ENCODE measurements at regions of chr14 and their contacts with region 1.

Region 1: GRCh38 chr14:64891839-64892375 is 12.2 kb upstream of the SPTB start:
- DNase-seq: peak; percentile 36
- ATAC-seq: peak; percentile 91
- H3K4me3 ChIP-seq: no peak overlapping the region
- H3K27ac ChIP-seq: no peak overlapping the region
- H3K4me1 ChIP-seq: no peaks in the 10 kb centered on the region
- H3K27me3 ChIP-seq: 0 out of 4 replicates have a peak, but pooled peaks cover 0 to 4% of the 10 kb centered on the region in 2 experiments
- CTCF ChIP-seq: peak; percentile 42 to 77 (median 62); a peak in 5 of 6 replicates
- EP300 ChIP-seq: no peak
- POLR2A ChIP-seq: no peak
- RAD21 ChIP-seq: peak; percentile 81

Region 2: GRCh38 chr14:64671591-64671990 is 220.3 kb before region 1 on chr14:
- CTCF ChIA-PET with region 1: interaction called, 15 read pairs
- POLR2A ChIA-PET with region 1: no interaction called
- RAD21 ChIA-PET with region 1: interaction called, 8 read pairs
- SMC1A ChIA-PET with region 1: interaction called, 38 read pairs
- in situ Hi-C with region 1: no loop called
- intact Hi-C with region 1: loop called (anchors 5 kb)
- DNase-seq: no peak
- ATAC-seq: peak; percentile 54
- H3K4me3 ChIP-seq: no peak overlapping the region
- H3K27ac ChIP-seq: no peak overlapping the region
- H3K4me1 ChIP-seq: peaks cover 6% of the 10 kb centered on the region
- H3K27me3 ChIP-seq: no peaks in the 10 kb centered on the region
- CTCF ChIP-seq: peak; percentile 63 to 66 (median 66)
- EP300 ChIP-seq: no peak
- POLR2A ChIP-seq: no peak
- RAD21 ChIP-seq: peak; percentile 70

Region 3: GRCh38 chr14:64708148-64709004 is 183.5 kb before region 1 on chr14:
- CTCF ChIA-PET with region 1: no interaction called
- POLR2A ChIA-PET with region 1: no interaction called
- RAD21 ChIA-PET with region 1: no interaction called
- SMC1A ChIA-PET with region 1: no interaction called
- in situ Hi-C with region 1: no loop called
- intact Hi-C with region 1: no loop called
- DNase-seq: no peak
- ATAC-seq: peak; percentile 29
- H3K4me3 ChIP-seq: no peak overlapping the region
- H3K27ac ChIP-seq: no peak overlapping the region
- H3K4me1 ChIP-seq: peaks cover 5% of the 10 kb centered on the region; the same call in 1 of the 2 replicates
- H3K27me3 ChIP-seq: peaks cover 4 to 14% of the 10 kb centered on the region in 2 experiments; a peak in 3 of 4 replicates
- CTCF ChIP-seq: no peak
- EP300 ChIP-seq: no peak
- POLR2A ChIP-seq: no peak
- RAD21 ChIP-seq: no peak

Region 4: DNA sequence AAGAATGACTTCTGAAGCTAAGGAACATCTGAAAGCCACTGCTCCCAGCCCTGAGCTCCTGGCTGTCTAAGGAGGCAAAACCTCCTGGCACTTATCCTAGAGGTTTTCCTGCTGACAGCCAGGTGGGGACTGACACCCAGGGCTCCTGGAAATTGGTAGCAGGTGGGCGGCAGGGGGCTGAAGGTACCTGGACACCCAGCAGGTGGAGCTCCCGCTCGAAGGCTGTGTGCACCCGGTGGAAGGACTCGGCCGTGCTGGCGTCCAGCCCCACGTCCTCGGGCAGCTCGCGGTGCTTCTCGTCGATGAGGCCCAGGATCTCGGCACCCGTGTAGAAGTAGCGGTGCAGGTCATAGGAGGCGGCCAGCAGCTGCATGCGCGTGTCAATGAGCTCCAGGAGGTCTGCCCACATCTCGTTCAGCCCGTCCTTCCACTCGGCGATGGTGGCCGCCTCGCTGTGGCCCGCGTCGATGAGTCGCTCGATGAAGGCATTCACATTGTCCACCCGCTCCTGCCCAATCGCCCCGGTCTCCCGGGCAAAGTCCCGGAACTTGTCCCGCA is 119.4 kb before region 1 on chr14:
- CTCF ChIA-PET with region 1: interaction called, 10 read pairs
- POLR2A ChIA-PET with region 1: no interaction called
- RAD21 ChIA-PET with region 1: interaction called, 13 read pairs
- SMC1A ChIA-PET with region 1: interaction called, 8 read pairs
- in situ Hi-C with region 1: no loop called
- intact Hi-C with region 1: no loop called
- DNase-seq: no peak
- ATAC-seq: no peak
- H3K4me3 ChIP-seq: no peak overlapping the region
- H3K27ac ChIP-seq: no peak overlapping the region
- H3K4me1 ChIP-seq: no peaks in the 10 kb centered on the region
- H3K27me3 ChIP-seq: no peaks in the 10 kb centered on the region; a peak in 1 of 4 replicates
- CTCF ChIP-seq: 0 out of 6 replicates have a peak, but pooled peaks of 2 of the 3 experiments have one; percentile 3 to 6
- EP300 ChIP-seq: no peak
- POLR2A ChIP-seq: no peak
- RAD21 ChIP-seq: no peak

Region 5: GRCh38 chr14:64817631-64818030 is 74.3 kb before region 1 on chr14:
- CTCF ChIA-PET with region 1: interaction called, 111 read pairs
- POLR2A ChIA-PET with region 1: no interaction called
- RAD21 ChIA-PET with region 1: interaction called, 87 read pairs
- SMC1A ChIA-PET with region 1: interaction called, 88 read pairs
- in situ Hi-C with region 1: loop called (anchors 5 kb)
- intact Hi-C with region 1: no loop called
- DNase-seq: no peak
- ATAC-seq: no peak
- H3K4me3 ChIP-seq: no peak overlapping the region
- H3K27ac ChIP-seq: no peak overlapping the region
- H3K4me1 ChIP-seq: no peaks in the 10 kb centered on the region
- H3K27me3 ChIP-seq: peaks cover 6 to 7% of the 10 kb centered on the region in 2 experiments; a peak in 3 of 4 replicates
- CTCF ChIP-seq: no peak
- EP300 ChIP-seq: no peak
- POLR2A ChIP-seq: no peak
- RAD21 ChIP-seq: no peak

Region 6: GRCh38 chr14:64844272-64844671 is 47.6 kb before region 1 on chr14:
- CTCF ChIA-PET with region 1: interaction called, 8 read pairs
- POLR2A ChIA-PET with region 1: no interaction called
- RAD21 ChIA-PET with region 1: interaction called, 11 read pairs
- SMC1A ChIA-PET with region 1: interaction called, 5 read pairs
- in situ Hi-C with region 1: no loop called
- intact Hi-C with region 1: no loop called
- DNase-seq: peak; percentile 35
- ATAC-seq: peak; percentile 92
- H3K4me3 ChIP-seq: no peak overlapping the region
- H3K27ac ChIP-seq: no peak overlapping the region
- H3K4me1 ChIP-seq: peaks cover 9% of the 10 kb centered on the region
- H3K27me3 ChIP-seq: no peaks in the 10 kb centered on the region; a peak in 1 of 4 replicates
- CTCF ChIP-seq: no peak
- EP300 ChIP-seq: no peak
- POLR2A ChIP-seq: no peak
- RAD21 ChIP-seq: no peak

Region 7: DNA sequence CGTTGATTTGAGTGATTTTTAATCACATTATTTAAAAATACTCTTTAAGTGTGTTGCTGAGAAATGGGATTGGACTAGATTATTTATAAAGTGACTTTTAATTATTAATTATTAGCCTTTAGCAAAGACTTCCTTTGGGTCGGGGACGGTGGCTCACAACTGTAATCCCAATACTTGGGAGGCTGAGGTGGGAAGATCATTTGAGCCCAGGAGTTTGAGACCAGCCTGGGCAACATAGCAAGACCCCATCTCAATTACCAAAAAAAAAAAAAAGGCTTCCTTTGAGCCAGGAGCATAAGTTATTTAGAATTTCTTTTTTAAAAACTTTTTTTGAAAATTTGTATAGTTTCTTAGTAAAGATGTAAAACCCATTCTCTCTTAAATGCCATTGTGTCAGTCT is 31.1 kb after region 1 on chr14:
- CTCF ChIA-PET with region 1: interaction called, 9 read pairs
- POLR2A ChIA-PET with region 1: no interaction called
- RAD21 ChIA-PET with region 1: interaction called, 4 read pairs
- SMC1A ChIA-PET with region 1: interaction called, 14 read pairs
- in situ Hi-C with region 1: no loop called
- intact Hi-C with region 1: no loop called
- DNase-seq: no peak
- ATAC-seq: no peak
- H3K4me3 ChIP-seq: no peak overlapping the region
- H3K27ac ChIP-seq: no peak overlapping the region
- H3K4me1 ChIP-seq: peaks cover 3% of the 10 kb centered on the region
- H3K27me3 ChIP-seq: no peaks in the 10 kb centered on the region
- CTCF ChIP-seq: no peak
- EP300 ChIP-seq: no peak
- POLR2A ChIP-seq: no peak
- RAD21 ChIP-seq: no peak

Measured in GM12878 (cell line).